CD4-positive, alpha-beta T cell (primary cell): ENCODE measurements at regions of chr2 and their contacts with region 1.

Region 1: GRCh38 chr2:178478439-178479274 is at the start of gene FKBP7:
- DNase-seq: peak; percentile 74 to 95 (median 82)
- ATAC-seq: peak; percentile 82
- H3K4me3 ChIP-seq: peak within 1 kb of the TSS; percentile 66
- H3K4me3 Mint-ChIP-seq: peak within 1 kb of the TSS; percentile 96
- H3K27ac ChIP-seq: peak within 1 kb of the TSS; percentile 76 to 83
- H3K27ac Mint-ChIP-seq: peak within 1 kb of the TSS; percentile 91
- H3K4me1 ChIP-seq: peaks cover 42% of the 10 kb centered on the region
- H3K4me1 Mint-ChIP-seq: peaks cover 46% of the 10 kb centered on the region
- H3K27me3 ChIP-seq: no peaks in the 10 kb centered on the region
- H3K27me3 Mint-ChIP-seq: no peaks in the 10 kb centered on the region
- CTCF ChIP-seq: peak; percentile 81
- total RNA-seq, gene FKBP7: 0.25 to 0.55 TPM

Region 2: DNA sequence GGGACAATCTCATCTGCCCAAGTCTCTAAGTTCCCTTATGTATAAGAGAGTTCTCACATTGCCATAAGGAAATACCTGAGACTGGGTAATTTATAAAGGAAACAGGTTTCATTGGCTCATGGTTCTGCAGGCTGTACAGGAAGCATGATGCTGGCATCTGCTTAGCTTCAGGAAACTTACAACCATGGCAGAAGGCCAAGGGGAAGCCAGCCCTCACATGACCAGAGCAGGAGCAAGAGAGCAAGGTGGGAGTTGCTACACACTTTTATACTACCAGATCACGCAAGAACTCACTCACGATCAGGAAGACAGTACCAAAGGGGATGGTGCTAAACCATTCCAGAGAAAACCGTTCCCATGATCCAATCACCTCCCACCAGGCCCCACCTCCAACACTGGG is 101.6 kb before region 1 on chr2:
- CTCF ChIA-PET with region 1: no interaction called
- POLR2A ChIA-PET with region 1: no interaction called
- intact Hi-C with region 1: no loop called
- DNase-seq: no peak
- ATAC-seq: no peak
- H3K4me3 ChIP-seq: no peak overlapping the region
- H3K4me3 Mint-ChIP-seq: no peak overlapping the region
- H3K27ac ChIP-seq: no peak overlapping the region
- H3K27ac Mint-ChIP-seq: no peak overlapping the region
- H3K4me1 ChIP-seq: no peaks in the 10 kb centered on the region
- H3K4me1 Mint-ChIP-seq: no peaks in the 10 kb centered on the region
- H3K27me3 ChIP-seq: peaks cover 4 to 15% of the 10 kb centered on the region in 2 experiments
- H3K27me3 Mint-ChIP-seq: peaks cover 43% of the 10 kb centered on the region
- CTCF ChIP-seq: no peak

Region 3: GRCh38 chr2:178450774-178451525 is 27.7 kb before region 1 on chr2 and contains the starts of genes PJVK and PRKRA:
- CTCF ChIA-PET with region 1: interaction called, 10 read pairs
- POLR2A ChIA-PET with region 1: interaction called, 38 read pairs
- intact Hi-C with region 1: loop called (anchors 1 to 2 kb)
- DNase-seq: peak; percentile 90 to 98 (median 95)
- ATAC-seq: peak; percentile 84
- H3K4me3 ChIP-seq: peak within 1 kb of the TSS; percentile 77
- H3K4me3 Mint-ChIP-seq: peak within 1 kb of the TSS; percentile 91
- H3K27ac ChIP-seq: peak within 1 kb of the TSS; percentile 78 to 98
- H3K27ac Mint-ChIP-seq: peak within 1 kb of the TSS; percentile 97
- H3K4me1 ChIP-seq: peaks cover 27% of the 10 kb centered on the region
- H3K4me1 Mint-ChIP-seq: peaks cover 35% of the 10 kb centered on the region
- H3K27me3 ChIP-seq: no peaks in the 10 kb centered on the region
- H3K27me3 Mint-ChIP-seq: no peaks in the 10 kb centered on the region
- CTCF ChIP-seq: no peak
- total RNA-seq, gene PJVK: 3.8 to 4.2 TPM
- total RNA-seq, gene PRKRA: 118 to 120 TPM